ENCODE measurements at regions of chr19 and their contacts with region 1.

Region 1: GRCh38 chr19:14006243-14006765 is at the start of gene RFX1:
- DNase-seq: peak; percentile 100
- H3K4me3 ChIP-seq: peak within 1 kb of the TSS; percentile 68 to 89 (median 79)
- H3K27ac ChIP-seq: peak within 1 kb of the TSS; percentile 99
- H3K4me1 ChIP-seq: peaks cover 15 to 48% (median 44%) of the 10 kb centered on the region in 4 experiments
- H3K27me3 ChIP-seq: no peaks in the 10 kb centered on the region

Region 2: GRCh38 chr19:13978347-13978733 is 28.0 kb before region 1 on chr19:
- CTCF ChIA-PET with region 1: interaction called, 18 read pairs
- POLR2A ChIA-PET with region 1: interaction called, 24 read pairs
- DNase-seq: peak; percentile 57 to 78 (median 76)
- H3K4me3 ChIP-seq: peak overlapping the region in 3 of 7 experiments; percentile 61 to 76 (median 69)
- H3K27ac ChIP-seq: peak overlapping the region in 1 of 2 experiments; percentile 43
- H3K4me1 ChIP-seq: peaks cover 0 to 55% (median 48%) of the 10 kb centered on the region in 4 experiments
- H3K27me3 ChIP-seq: no peaks in the 10 kb centered on the region

Region 3: DNA sequence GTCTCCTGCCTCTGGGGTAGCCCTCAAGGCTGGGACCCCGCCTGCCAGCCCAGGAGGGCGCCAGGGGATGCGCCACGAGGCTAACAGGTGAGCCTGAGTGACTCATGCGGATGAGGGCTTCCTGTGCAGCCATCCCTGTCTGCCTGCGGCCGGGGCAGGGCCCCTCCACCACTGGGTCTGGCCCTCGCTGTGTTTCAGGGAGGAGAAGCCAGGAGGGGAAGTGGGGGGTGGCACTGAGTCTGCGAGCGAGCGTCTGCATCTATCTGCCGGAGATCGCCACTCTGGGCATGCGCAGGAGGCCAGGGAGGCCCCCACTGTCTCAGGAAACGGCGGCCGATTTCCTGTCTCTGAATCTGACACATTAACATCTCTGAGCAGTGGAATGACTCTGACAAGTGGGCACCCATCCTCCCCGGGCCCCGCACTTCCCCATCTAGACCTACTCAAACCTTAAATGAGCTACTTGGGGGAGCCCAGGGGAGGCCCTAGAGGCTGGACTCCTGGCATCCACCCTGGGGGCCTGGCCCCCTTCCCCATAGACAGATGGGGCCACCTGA is 19.9 kb before region 1 on chr19:
- CTCF ChIA-PET with region 1: interaction called, 39 read pairs
- POLR2A ChIA-PET with region 1: interaction called, 29 read pairs
- DNase-seq: peak; percentile 95 to 99 (median 99)
- H3K4me3 ChIP-seq: peak overlapping the region in 5 of 7 experiments; percentile 26 to 65 (median 56)
- H3K27ac ChIP-seq: peak overlapping the region; percentile 74 to 92
- H3K4me1 ChIP-seq: peaks cover 3 to 84% (median 67%) of the 10 kb centered on the region in 4 experiments
- H3K27me3 ChIP-seq: no peaks in the 10 kb centered on the region

Region 4: DNA sequence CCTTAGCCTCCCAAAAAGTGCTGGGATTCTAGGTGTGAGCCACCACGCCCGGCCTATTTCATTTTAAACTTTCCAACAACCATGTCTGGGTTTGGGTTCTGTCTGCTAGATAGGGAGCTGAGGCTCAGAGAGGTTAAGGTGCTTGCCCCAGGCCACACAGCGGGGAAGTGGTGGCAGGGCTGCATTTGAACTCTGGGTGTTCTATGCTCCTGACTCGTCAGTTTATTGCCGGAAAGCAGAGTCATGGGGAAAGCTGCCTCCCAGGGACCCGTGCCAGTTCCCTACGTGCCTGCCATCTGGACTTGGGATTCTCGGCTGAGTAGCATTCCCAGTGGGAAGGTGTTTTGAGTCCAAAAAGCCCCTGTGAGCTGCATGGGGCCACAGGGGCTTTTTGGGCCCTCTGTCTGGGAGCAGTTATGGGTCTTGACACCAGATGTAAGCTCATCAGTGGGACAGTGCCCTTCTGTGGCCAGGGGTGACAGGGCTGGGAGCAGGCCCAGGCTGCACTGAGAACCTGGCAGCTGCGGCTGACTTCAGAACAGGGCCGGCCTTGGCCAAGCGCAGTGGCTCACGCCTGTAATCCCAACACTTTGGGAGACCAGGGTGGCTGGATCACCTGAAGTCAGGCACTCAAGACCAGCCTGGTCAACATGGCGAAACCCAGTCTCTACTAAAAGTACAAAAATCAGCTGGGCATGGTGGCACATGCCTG is 11.1 kb before region 1 on chr19:
- CTCF ChIA-PET with region 1: interaction called, 39 read pairs
- POLR2A ChIA-PET with region 1: no interaction called
- DNase-seq: no peak
- H3K4me3 ChIP-seq: no peak overlapping the region
- H3K27ac ChIP-seq: no peak overlapping the region
- H3K4me1 ChIP-seq: peaks cover 0 to 2% (median under 1%) of the 10 kb centered on the region in 4 experiments
- H3K27me3 ChIP-seq: no peaks in the 10 kb centered on the region

Measured in common myeloid progenitor, CD34-positive (primary cell).